HEK293 (cell line): ENCODE measurements at regions of chr11 and their contacts with region 1.

Region 1: DNA sequence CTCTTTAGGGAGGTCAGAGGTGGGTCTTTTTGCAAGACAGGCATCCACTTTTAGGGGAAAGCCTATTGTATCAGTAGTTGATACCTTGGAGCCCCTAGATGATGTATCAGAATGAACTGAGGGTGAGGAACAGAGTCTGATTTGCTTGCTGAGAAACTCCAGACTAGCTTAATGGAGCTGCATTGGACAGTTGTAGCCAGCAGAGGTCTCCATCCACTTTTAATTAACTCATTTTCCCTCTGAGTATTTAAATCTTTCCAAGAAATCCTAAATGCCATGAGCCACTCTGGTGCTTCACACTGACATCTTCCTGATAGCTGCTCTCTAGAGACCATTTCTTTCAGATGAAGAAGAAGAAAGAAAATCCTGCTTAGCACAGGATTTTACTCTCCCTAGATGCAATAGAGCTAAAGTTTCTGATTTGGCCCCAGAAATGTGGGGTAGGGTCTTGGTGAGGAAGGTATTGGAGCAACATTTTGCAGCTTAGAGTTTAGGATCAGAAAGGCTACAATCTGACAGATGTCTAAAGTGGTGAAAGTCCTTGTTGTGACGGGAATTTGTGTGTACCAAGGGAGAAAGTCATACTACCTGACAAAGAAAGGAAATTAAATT is 38.0 kb downstream of the EXT2 start:
- H3K4me3 ChIP-seq: no peak overlapping the region
- H3K27ac ChIP-seq: no peak overlapping the region
- H3K4me1 ChIP-seq: no peaks in the 10 kb centered on the region
- CTCF ChIP-seq: no peak

Region 2: GRCh38 chr11:44143943-44144909 is 10.8 kb after region 1 on chr11:
- CTCF ChIA-PET with region 1: interaction called, 27 read pairs
- POLR2A ChIA-PET with region 1: interaction called, 4 read pairs
- H3K4me3 ChIP-seq: no peak overlapping the region
- H3K27ac ChIP-seq: no peak overlapping the region
- H3K4me1 ChIP-seq: peaks cover 2% of the 10 kb centered on the region; the same call in 1 of the 2 replicates
- CTCF ChIP-seq: no peak

Region 3: DNA sequence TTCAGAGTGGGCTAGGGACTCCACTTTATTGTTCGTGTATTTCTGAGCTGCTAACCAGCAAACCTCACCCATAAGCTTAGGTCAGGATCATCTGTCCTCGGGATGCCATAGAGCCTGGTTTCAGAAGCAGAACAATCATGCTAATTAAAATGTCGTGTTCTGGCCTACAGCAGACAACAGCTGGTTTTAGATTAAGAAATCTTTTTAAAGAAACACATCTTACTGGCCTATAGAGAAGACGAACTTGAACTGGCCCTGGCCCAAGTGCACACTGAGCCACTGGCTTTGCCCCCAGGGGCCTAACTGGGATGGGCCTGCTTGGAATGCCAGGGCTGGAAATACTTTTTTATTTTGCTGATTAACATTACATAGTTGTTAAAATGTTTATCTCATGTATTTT is 113.3 kb after region 1 on chr11:
- CTCF ChIA-PET with region 1: no interaction called
- POLR2A ChIA-PET with region 1: no interaction called
- H3K4me3 ChIP-seq: no peak overlapping the region
- H3K27ac ChIP-seq: no peak overlapping the region
- H3K4me1 ChIP-seq: no peaks in the 10 kb centered on the region
- CTCF ChIP-seq: no peak

Region 4: GRCh38 chr11:44538375-44539054 is 405.1 kb after region 1 on chr11:
- CTCF ChIA-PET with region 1: interaction called, 19 read pairs
- POLR2A ChIA-PET with region 1: no interaction called
- H3K4me3 ChIP-seq: no peak overlapping the region
- H3K27ac ChIP-seq: no peak overlapping the region
- H3K4me1 ChIP-seq: no peaks in the 10 kb centered on the region
- CTCF ChIP-seq: peak; percentile 80